ENCODE measurements at regions of chr1 and their contacts with region 1.

Region 1: DNA sequence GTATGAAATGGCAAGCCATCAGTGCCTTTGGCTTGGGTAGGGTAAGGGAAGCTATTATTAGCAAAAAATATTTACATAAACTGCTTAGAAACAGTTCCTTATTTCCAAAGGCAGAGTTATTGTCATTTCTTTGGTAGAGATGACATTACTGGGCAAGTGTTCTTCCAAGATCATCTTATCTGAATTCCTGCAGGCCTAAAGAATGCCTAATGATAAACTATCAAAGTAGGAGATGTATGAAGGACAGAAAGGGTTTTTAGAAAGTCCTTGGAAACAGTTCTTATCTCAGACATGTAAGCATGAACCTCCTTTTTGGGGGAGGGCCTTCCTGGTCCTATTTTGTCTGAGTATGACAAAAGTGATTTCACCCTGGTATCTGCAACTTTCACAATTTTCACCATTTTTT is 5.1 kb upstream of the FRRS1 start:
- DNase-seq: no peak
- ATAC-seq: no peak
- H3K4me3 ChIP-seq: no peak overlapping the region
- H3K4me3 Mint-ChIP-seq: no peak overlapping the region
- H3K27ac ChIP-seq: no peak overlapping the region
- H3K27ac Mint-ChIP-seq: no peak overlapping the region
- H3K4me1 ChIP-seq: peaks cover 0 to 3% of the 10 kb centered on the region in 2 experiments
- H3K4me1 Mint-ChIP-seq: peaks cover 2 to 4% (median 2%) of the 10 kb centered on the region in 3 donors
- H3K27me3 ChIP-seq: peaks cover 0 to 2% of the 10 kb centered on the region in 2 experiments
- H3K27me3 Mint-ChIP-seq: peaks cover 4 to 9% of the 10 kb centered on the region in 2 donors

Region 2: GRCh38 chr1:99788886-99789285 is 17.4 kb after region 1 on chr1:
- CTCF ChIA-PET with region 1: interaction called in 1 of 2 experiments, 10 read pairs
- POLR2A ChIA-PET with region 1: no interaction called
- DNase-seq: no peak
- ATAC-seq: no peak
- H3K4me3 ChIP-seq: no peak overlapping the region
- H3K4me3 Mint-ChIP-seq: no peak overlapping the region
- H3K27ac ChIP-seq: no peak overlapping the region
- H3K27ac Mint-ChIP-seq: no peak overlapping the region
- H3K4me1 ChIP-seq: peaks cover 9 to 12% of the 10 kb centered on the region in 2 experiments
- H3K4me1 Mint-ChIP-seq: peaks cover 12 to 24% (median 19%) of the 10 kb centered on the region in 3 donors
- H3K27me3 ChIP-seq: peaks cover 0 to 4% of the 10 kb centered on the region in 2 experiments
- H3K27me3 Mint-ChIP-seq: peaks cover 9 to 14% of the 10 kb centered on the region in 2 donors

Measured in T-cell (primary cell).